H1 (cell line): ENCODE measurements at regions of chr4 and their contacts with region 1.

Region 1: GRCh38 chr4:182938205-182938645 is 21.0 kb upstream of the DCTD start:
- DNase-seq: peak in 1 of 2 experiments; percentile 89
- H3K4me3 ChIP-seq: no peak overlapping the region
- H3K27ac ChIP-seq: no peak overlapping the region
- H3K4me1 ChIP-seq: peaks cover 0 to 4% (median 1%) of the 10 kb centered on the region in 4 experiments; a peak in 3 of 7 replicates
- H3K27me3 ChIP-seq: no peaks in the 10 kb centered on the region
- CTCF ChIP-seq: peak; percentile 88 to 97 (median 96)
- EP300 ChIP-seq: no peak
- POLR2A ChIP-seq: no peak
- RAD21 ChIP-seq: peak; percentile 93 to 96

Region 2: DNA sequence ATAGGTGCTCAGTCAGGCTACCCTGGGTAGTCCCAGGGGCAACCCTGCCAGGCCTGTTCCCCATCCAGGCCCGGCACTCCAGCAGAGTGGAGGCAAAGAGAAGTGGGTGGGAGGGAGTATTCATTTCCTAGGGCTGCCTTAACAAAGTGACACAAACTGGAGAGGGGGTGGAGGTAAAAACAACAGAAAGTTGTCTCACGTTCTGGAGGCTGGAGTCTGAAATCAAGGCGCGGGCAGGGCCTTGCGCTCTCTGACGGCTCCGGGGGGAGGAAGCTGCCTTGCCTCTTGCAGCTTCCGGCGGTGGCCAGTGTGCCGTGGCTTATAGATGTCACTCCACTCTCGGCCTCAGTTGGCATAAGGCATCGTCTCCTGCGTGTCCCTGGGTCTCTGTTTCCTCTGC is 111.8 kb before region 1 on chr4:
- CTCF ChIA-PET with region 1: no interaction called
- POLR2A ChIA-PET with region 1: no interaction called
- DNase-seq: no peak
- H3K4me3 ChIP-seq: no peak overlapping the region
- H3K27ac ChIP-seq: no peak overlapping the region
- H3K4me1 ChIP-seq: peaks cover 0 to 8% (median 2%) of the 10 kb centered on the region in 4 experiments; a peak in 4 of 7 replicates
- H3K27me3 ChIP-seq: no peaks in the 10 kb centered on the region
- CTCF ChIP-seq: no peak
- EP300 ChIP-seq: no peak
- POLR2A ChIP-seq: no peak
- RAD21 ChIP-seq: no peak

Region 3: GRCh38 chr4:182955411-182955810 is 17.2 kb after region 1 on chr4:
- CTCF ChIA-PET with region 1: interaction called, 41 read pairs
- POLR2A ChIA-PET with region 1: no interaction called
- DNase-seq: no peak
- H3K4me3 ChIP-seq: no peak overlapping the region
- H3K27ac ChIP-seq: no peak overlapping the region
- H3K4me1 ChIP-seq: no peaks in the 10 kb centered on the region
- H3K27me3 ChIP-seq: 0 out of 7 replicates have a peak, but pooled peaks cover 0 to 3% (median 0%) of the 10 kb centered on the region in 4 experiments
- CTCF ChIP-seq: no peak
- EP300 ChIP-seq: no peak
- POLR2A ChIP-seq: no peak
- RAD21 ChIP-seq: no peak

Region 4: DNA sequence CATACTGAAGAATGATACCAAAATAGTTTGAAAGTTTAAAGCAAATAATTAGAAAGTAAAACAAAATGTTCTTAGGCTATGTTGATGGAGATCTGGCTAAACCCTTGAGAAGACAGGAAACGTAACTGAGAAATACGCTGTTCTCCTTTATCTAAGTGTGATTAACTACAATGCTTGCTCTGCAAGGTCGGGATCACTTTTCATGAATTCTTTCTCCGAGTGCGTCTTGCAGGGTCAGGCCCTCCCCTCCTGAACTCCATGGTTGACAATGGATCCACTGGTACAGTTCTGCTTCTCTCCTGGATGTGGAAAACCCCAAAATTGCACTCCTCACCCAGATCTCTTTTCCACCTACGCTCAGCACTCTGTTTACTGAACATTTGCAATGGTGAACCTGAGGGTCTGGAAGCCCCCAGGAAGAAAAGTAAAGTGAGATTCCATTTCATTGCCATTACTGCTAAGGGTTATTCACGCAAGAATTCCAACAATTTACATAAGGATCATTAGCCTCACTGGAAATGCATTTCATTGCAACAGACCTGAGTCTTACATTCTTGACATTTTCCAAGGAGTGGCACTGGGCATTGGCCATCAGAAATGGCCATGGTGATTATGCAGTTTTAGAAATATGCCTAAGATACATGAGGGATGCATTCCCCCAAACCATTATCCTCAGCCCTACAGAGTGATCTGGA is 136.2 kb after region 1 on chr4:
- CTCF ChIA-PET with region 1: interaction called, 32 read pairs
- POLR2A ChIA-PET with region 1: no interaction called
- DNase-seq: no peak
- H3K4me3 ChIP-seq: peak overlapping the region in 1 of 4 experiments; percentile 7; a peak in 1 of 8 replicates
- H3K27ac ChIP-seq: no peak overlapping the region
- H3K4me1 ChIP-seq: peaks cover 3 to 14% (median 7%) of the 10 kb centered on the region in 4 experiments; a peak in 5 of 7 replicates
- H3K27me3 ChIP-seq: no peaks in the 10 kb centered on the region
- CTCF ChIP-seq: no peak
- EP300 ChIP-seq: no peak
- POLR2A ChIP-seq: no peak
- RAD21 ChIP-seq: no peak

Region 5: DNA sequence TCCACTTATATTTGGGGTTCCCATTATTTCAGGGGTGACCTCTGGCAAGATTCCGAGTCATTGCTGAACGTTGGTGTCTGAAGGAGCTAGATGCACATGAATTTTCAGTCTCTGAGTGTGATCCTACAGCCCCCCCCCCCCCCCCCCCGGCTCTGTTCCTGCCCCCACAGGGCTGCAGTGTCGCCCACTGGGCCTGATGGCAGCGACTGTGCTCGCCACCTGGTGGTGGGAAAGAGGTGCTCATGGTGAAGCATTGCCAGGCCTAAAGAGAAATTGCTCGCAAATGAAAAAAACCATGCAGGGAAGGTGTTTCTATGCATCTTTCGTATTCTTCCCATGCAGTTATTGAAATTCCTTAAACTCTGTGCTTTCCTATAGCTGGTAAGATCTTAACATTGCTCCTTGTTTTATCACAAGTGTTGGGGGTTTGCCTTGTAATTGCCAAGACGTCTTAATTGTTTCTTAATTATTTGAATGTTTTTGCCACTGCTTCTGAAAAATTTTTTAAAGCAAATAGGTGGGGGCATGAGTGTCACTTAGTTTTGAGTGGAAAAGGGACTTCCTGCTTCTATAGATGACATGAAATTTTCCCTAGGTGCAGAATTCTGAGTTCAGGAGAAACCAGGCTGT is 318.6 kb after region 1 on chr4:
- CTCF ChIA-PET with region 1: interaction called, 50 read pairs
- POLR2A ChIA-PET with region 1: no interaction called
- DNase-seq: peak in 1 of 2 experiments; percentile 73
- H3K4me3 ChIP-seq: no peak overlapping the region
- H3K27ac ChIP-seq: no peak overlapping the region
- H3K4me1 ChIP-seq: peaks cover 0 to 4% (median 0%) of the 10 kb centered on the region in 4 experiments; a peak in 1 of 7 replicates
- H3K27me3 ChIP-seq: no peaks in the 10 kb centered on the region
- CTCF ChIP-seq: peak; percentile 84 to 89 (median 88)
- EP300 ChIP-seq: no peak
- POLR2A ChIP-seq: no peak
- RAD21 ChIP-seq: peak; percentile 77 to 78